Tibial artery (tissue), 4 donors: ENCODE measurements at regions of chr9 and their contacts with region 1.

Region 1: DNA sequence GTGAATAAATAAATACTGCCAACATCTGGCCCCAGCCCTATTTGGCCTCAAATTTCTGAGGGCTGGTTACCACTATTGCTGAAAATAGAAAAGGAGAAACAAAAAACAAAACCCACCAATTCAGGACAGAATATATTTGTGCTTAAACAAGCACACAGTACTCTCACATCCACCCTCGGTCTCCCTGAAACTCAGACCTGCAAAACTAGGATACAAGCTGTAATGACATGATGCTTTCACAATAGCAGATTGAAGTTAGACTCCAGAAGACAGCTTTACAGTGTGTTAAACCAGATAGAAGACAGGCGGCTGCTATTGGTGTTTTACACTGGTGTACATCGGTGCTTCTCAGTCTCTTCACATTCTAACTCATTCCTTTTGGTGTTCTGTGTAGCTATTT is 214.9 kb upstream of the DMRT1 start:
- DNase-seq: no peak
- H3K4me3 ChIP-seq: peak overlapping the region; percentile 3 to 12
- H3K27ac ChIP-seq: peak overlapping the region; percentile 79 to 83
- H3K4me1 ChIP-seq: peaks cover 0 to 56% (median 30%) of the 10 kb centered on the region in 4 donors
- H3K27me3 ChIP-seq: no peaks in the 10 kb centered on the region
- CTCF ChIP-seq: no peak

Region 2: GRCh38 chr9:684054-684890 is 57.7 kb after region 1 on chr9:
- intact Hi-C with region 1: loop called (anchors 10 kb)
- DNase-seq: no peak
- H3K4me3 ChIP-seq: peak overlapping the region; percentile 48 to 51
- H3K27ac ChIP-seq: peak overlapping the region; percentile 82 to 87
- H3K4me1 ChIP-seq: peaks cover 0 to 68% (median 41%) of the 10 kb centered on the region in 4 donors
- H3K27me3 ChIP-seq: no peaks in the 10 kb centered on the region
- CTCF ChIP-seq: no peak

Region 3: GRCh38 chr9:976258-976942 is 349.8 kb after region 1 on chr9 and contains the start of gene DMRT3:
- intact Hi-C with region 1: no loop called
- DNase-seq: no peak
- H3K4me3 ChIP-seq: peak within 1 kb of the TSS; percentile 5 to 38
- H3K27ac ChIP-seq: no peak within 1 kb of the TSS
- H3K4me1 ChIP-seq: peaks cover 0 to 31% (median 27%) of the 10 kb centered on the region in 4 donors
- H3K27me3 ChIP-seq: peaks cover 0 to 84% of the 10 kb centered on the region in 2 donors
- CTCF ChIP-seq: no peak